K562 (cell line): ENCODE measurements at regions of chr4 and their contacts with region 1.

Region 1: DNA sequence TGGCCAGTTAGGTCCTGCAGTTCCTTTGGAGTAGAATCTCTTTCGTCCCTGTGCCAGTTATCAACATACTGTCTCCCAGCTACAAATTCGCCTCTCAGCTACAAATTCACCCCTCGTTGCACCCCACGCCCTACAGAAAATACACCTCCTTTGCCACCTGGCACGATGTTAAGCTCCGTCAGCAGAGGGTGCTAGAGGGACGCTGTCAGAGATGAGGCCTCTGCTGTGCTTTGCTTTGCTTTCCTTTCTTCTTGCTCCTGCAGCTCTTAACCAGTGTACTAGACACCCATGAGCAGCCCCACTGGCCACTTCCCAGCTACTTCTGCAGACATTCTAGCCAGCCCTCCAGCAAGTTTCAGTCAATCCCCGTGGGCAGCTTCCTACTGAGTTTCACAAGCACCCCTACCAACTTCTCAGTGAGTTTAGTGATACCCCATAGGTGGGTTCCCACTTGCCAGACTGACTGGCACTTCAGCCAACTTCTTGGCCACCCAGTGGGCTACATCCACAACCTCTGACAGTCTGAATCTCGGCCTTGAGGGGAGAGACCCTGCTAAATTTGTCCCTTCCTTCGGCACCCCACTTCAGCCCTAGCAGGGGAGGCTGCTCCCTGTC is 21.8 kb downstream of the HAUS3 start:
- DNase-seq: peak; percentile 67 to 81 (median 69)
- ATAC-seq: peak; percentile 97
- H3K4me3 ChIP-seq: no peak overlapping the region
- H3K27ac ChIP-seq: no peak overlapping the region
- H3K4me1 ChIP-seq: no peaks in the 10 kb centered on the region; a peak in 1 of 5 replicates
- H3K27me3 ChIP-seq: peaks cover 0 to 9% of the 10 kb centered on the region in 2 experiments; a peak in 3 of 5 replicates
- CTCF ChIP-seq: peak; percentile 89 to 95 (median 90)
- EP300 ChIP-seq: no peak
- POLR2A ChIP-seq: no peak
- RAD21 ChIP-seq: peak; percentile 78 to 93

Region 2: DNA sequence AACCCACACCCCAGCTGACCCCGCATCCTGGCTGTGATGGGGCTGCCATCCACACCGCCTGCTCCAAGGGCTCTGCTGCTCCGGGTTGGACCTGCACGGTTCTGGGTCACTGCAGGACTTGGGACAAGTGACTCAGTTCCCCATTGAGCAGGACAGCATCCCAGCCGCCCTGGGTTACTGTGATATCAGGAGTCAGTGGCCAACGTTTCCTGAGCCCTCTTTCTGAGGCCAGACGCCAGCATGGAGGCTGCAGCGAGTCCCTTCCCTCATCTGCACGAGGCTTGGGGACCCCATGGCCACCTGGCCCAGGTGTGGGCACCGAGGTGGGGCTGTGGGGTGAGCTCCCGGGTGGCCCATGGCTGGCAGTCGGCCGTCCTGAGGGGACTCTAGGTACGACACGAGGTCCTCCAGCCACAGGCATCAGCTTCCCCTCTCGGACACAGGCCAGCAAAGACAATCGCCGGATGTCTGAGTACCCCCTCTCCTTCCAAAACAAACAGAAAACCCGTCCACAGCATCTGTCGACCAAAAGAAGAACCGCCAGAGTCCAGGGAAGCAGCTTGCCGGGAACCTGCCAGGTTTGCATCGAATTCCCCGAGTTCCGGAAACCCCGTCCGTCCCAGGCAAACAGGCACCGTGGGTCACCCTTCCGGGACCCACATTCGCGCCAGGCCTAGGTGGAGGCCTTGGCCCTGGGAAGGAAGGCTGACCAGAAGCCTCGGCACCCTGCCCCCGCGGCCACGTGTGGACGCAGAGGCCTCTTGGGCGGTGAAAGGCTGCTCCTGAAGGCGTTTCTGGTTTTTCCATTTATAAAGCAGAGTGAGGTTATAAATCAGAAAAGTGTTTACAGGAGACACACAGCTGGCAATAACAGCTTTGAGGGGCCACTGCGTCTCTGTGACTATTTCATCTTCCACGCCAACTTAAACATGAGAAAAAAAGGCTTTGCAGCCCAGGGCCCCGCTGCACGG is 672.0 kb before region 1 on chr4:
- CTCF ChIA-PET with region 1: no interaction called
- POLR2A ChIA-PET with region 1: no interaction called
- in situ Hi-C with region 1: no loop called
- intact Hi-C with region 1: no loop called
- DNase-seq: no peak
- ATAC-seq: peak; percentile 15
- H3K4me3 ChIP-seq: no peak overlapping the region
- H3K27ac ChIP-seq: no peak overlapping the region
- H3K4me1 ChIP-seq: peaks cover 0 to 58% of the 10 kb centered on the region in 2 experiments; a peak in 3 of 5 replicates
- H3K27me3 ChIP-seq: peaks cover 11 to 48% of the 10 kb centered on the region in 2 experiments; a peak in 4 of 5 replicates
- CTCF ChIP-seq: no peak
- EP300 ChIP-seq: no peak
- POLR2A ChIP-seq: no peak
- RAD21 ChIP-seq: no peak

Region 3: DNA sequence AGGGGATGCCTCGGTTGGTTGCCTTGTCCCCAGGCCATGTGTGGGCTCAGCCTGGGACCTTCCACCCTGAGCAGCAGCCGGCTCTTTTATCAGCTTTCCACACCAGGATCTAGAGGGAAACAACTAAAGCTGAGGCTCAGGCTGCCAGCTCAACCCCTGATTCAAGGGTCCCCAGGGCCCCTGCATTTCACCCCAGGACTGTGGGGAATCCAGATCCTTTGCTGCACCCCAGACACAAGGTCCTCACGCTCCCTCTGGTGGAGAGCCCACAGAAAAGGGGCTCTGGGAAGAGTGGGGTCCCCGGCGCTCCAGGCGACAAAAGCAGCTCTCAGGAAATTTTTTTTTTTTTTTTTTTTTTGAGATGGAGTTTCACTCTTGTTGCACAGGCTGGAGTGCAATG is 134.0 kb after region 1 on chr4:
- CTCF ChIA-PET with region 1: no interaction called
- POLR2A ChIA-PET with region 1: no interaction called
- in situ Hi-C with region 1: no loop called
- intact Hi-C with region 1: loop called (anchors 5 kb)
- DNase-seq: peak; percentile 23 to 53 (median 49)
- ATAC-seq: peak; percentile 56; the same call in 2 of the 3 replicates
- H3K4me3 ChIP-seq: no peak overlapping the region
- H3K27ac ChIP-seq: no peak overlapping the region
- H3K4me1 ChIP-seq: peaks cover 0 to 35% of the 10 kb centered on the region in 2 experiments; a peak in 2 of 5 replicates
- H3K27me3 ChIP-seq: no peaks in the 10 kb centered on the region
- CTCF ChIP-seq: peak in 2 of 3 experiments; percentile 49 to 51; a peak in 4 of 6 replicates
- EP300 ChIP-seq: no peak
- POLR2A ChIP-seq: no peak
- RAD21 ChIP-seq: peak in 1 of 2 experiments; percentile 31; a peak in 2 of 4 replicates

Region 4: GRCh38 chr4:2441393-2442174 is 221.5 kb after region 1 on chr4:
- CTCF ChIA-PET with region 1: interaction called, 25 read pairs
- POLR2A ChIA-PET with region 1: no interaction called
- in situ Hi-C with region 1: loop called (anchors 10 kb)
- intact Hi-C with region 1: loop called (anchors 1 kb)
- DNase-seq: peak; percentile 94 to 96 (median 95)
- ATAC-seq: peak; percentile 99
- H3K4me3 ChIP-seq: no peak overlapping the region; the same call in 1 of the 2 replicates
- H3K27ac ChIP-seq: no peak overlapping the region
- H3K4me1 ChIP-seq: peaks cover 4 to 44% of the 10 kb centered on the region in 2 experiments; a peak in 4 of 5 replicates
- H3K27me3 ChIP-seq: no peaks in the 10 kb centered on the region
- CTCF ChIP-seq: peak; percentile 99 to 100 (median 99)
- EP300 ChIP-seq: no peak
- POLR2A ChIP-seq: no peak
- RAD21 ChIP-seq: peak; percentile 86 to 98

Region 5: GRCh38 chr4:2462218-2462991 is 242.3 kb after region 1 on chr4:
- CTCF ChIA-PET with region 1: interaction called, 19 read pairs
- POLR2A ChIA-PET with region 1: no interaction called
- in situ Hi-C with region 1: no loop called
- intact Hi-C with region 1: no loop called
- DNase-seq: peak; percentile 77 to 83 (median 79)
- ATAC-seq: peak; percentile 92
- H3K4me3 ChIP-seq: peak overlapping the region; percentile 48
- H3K27ac ChIP-seq: no peak overlapping the region
- H3K4me1 ChIP-seq: peaks cover 17 to 61% of the 10 kb centered on the region in 2 experiments; a peak in 4 of 5 replicates
- H3K27me3 ChIP-seq: peaks cover 14 to 26% of the 10 kb centered on the region in 2 experiments; a peak in 4 of 5 replicates
- CTCF ChIP-seq: peak in 2 of 3 experiments; percentile 54 to 83; a peak in 4 of 6 replicates
- EP300 ChIP-seq: no peak
- POLR2A ChIP-seq: no peak
- RAD21 ChIP-seq: peak; percentile 29 to 45; a peak in 3 of 4 replicates